B cell (primary cell): ENCODE measurements at regions of chr10 and their contacts with region 1.

Region 1: GRCh38 chr10:1572519-1573333 is 164.6 kb downstream of the ADARB2 start:
- DNase-seq: no peak
- ATAC-seq: no peak
- H3K4me3 ChIP-seq: no peak overlapping the region
- H3K4me3 Mint-ChIP-seq: no peak overlapping the region
- H3K27ac ChIP-seq: no peak overlapping the region
- H3K27ac Mint-ChIP-seq: no peak overlapping the region
- H3K4me1 ChIP-seq: peaks cover 32% of the 10 kb centered on the region in 2 donors
- H3K4me1 Mint-ChIP-seq: peaks cover 41% of the 10 kb centered on the region
- H3K27me3 ChIP-seq: peaks cover 0 to 18% (median 2%) of the 10 kb centered on the region in 4 experiments
- H3K27me3 Mint-ChIP-seq: peaks cover 34% of the 10 kb centered on the region
- CTCF ChIP-seq: no peak

Region 2: GRCh38 chr10:1448252-1448929 is 124.3 kb before region 1 on chr10:
- CTCF ChIA-PET with region 1: no interaction called
- POLR2A ChIA-PET with region 1: no interaction called
- intact Hi-C with region 1: no loop called
- DNase-seq: no peak
- ATAC-seq: no peak
- H3K4me3 ChIP-seq: no peak overlapping the region
- H3K4me3 Mint-ChIP-seq: no peak overlapping the region
- H3K27ac ChIP-seq: no peak overlapping the region
- H3K27ac Mint-ChIP-seq: no peak overlapping the region
- H3K4me1 ChIP-seq: peaks cover 8 to 14% of the 10 kb centered on the region in 2 donors
- H3K4me1 Mint-ChIP-seq: peaks cover 25% of the 10 kb centered on the region
- H3K27me3 ChIP-seq: no peaks in the 10 kb centered on the region
- H3K27me3 Mint-ChIP-seq: no peaks in the 10 kb centered on the region
- CTCF ChIP-seq: no peak

Region 3: DNA sequence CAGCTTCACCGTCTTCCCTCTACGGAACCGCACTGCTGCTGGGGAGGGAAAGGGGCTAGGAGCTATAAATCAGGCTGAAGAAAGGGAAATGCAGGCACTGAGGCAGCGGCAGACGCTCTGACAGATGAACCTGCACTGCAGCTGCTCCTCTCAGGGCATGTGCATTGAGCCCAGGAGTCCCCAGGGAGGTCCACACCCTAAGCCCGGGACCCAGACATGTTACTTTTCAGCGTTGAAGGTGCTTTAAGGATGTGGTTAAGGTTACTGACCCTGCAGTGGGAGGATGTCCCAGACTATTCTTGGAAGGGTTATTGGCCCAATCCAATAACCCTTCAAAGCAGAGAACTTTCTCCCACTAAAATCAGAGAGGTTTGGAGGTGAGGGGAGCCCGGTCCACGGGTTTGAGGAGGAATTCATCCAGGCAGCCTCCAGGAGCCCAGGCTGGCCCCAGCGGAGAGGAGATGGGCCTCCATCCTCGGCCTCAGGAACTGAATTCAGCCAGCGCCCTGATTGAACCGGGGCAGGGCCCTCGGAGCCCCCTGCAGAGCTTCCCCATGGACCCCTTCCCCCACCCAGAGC is 89.2 kb after region 1 on chr10:
- CTCF ChIA-PET with region 1: no interaction called
- POLR2A ChIA-PET with region 1: interaction called, 5 read pairs
- intact Hi-C with region 1: loop called (anchors 1 kb)
- DNase-seq: peak; percentile 87
- ATAC-seq: peak; percentile 89
- H3K4me3 ChIP-seq: peak overlapping the region in 2 of 5 experiments; percentile 1 to 20
- H3K4me3 Mint-ChIP-seq: peak overlapping the region; percentile 79
- H3K27ac ChIP-seq: peak overlapping the region; percentile 68 to 71
- H3K27ac Mint-ChIP-seq: peak overlapping the region; percentile 75
- H3K4me1 ChIP-seq: peaks cover 31 to 32% of the 10 kb centered on the region in 2 donors
- H3K4me1 Mint-ChIP-seq: peaks cover 50% of the 10 kb centered on the region
- H3K27me3 ChIP-seq: peaks cover 0 to 5% (median 2%) of the 10 kb centered on the region in 4 experiments
- H3K27me3 Mint-ChIP-seq: peaks cover 19% of the 10 kb centered on the region
- CTCF ChIP-seq: no peak

Region 4: GRCh38 chr10:1893235-1893634 is 320.5 kb after region 1 on chr10:
- CTCF ChIA-PET with region 1: no interaction called
- POLR2A ChIA-PET with region 1: interaction called, 12 read pairs
- intact Hi-C with region 1: no loop called
- DNase-seq: no peak
- ATAC-seq: no peak
- H3K4me3 ChIP-seq: no peak overlapping the region
- H3K4me3 Mint-ChIP-seq: no peak overlapping the region
- H3K27ac ChIP-seq: no peak overlapping the region
- H3K27ac Mint-ChIP-seq: no peak overlapping the region
- H3K4me1 ChIP-seq: no peaks in the 10 kb centered on the region
- H3K4me1 Mint-ChIP-seq: no peaks in the 10 kb centered on the region
- H3K27me3 ChIP-seq: no peaks in the 10 kb centered on the region
- H3K27me3 Mint-ChIP-seq: peaks cover 3% of the 10 kb centered on the region
- CTCF ChIP-seq: no peak